Calu3 (cell line): ENCODE measurements at regions of chr18 and their contacts with region 1.

Region 1: GRCh38 chr18:76803814-76804213 is 18.5 kb upstream of the ZNF236 start:
- DNase-seq: peak; percentile 78
- H3K4me3 Mint-ChIP-seq: peak overlapping the region; percentile 26
- H3K27ac Mint-ChIP-seq: peak overlapping the region; percentile 38
- H3K4me1 Mint-ChIP-seq: peaks cover 8% of the 10 kb centered on the region
- H3K27me3 Mint-ChIP-seq: no peaks in the 10 kb centered on the region
- CTCF ChIP-seq: peak; percentile 75

Region 2: DNA sequence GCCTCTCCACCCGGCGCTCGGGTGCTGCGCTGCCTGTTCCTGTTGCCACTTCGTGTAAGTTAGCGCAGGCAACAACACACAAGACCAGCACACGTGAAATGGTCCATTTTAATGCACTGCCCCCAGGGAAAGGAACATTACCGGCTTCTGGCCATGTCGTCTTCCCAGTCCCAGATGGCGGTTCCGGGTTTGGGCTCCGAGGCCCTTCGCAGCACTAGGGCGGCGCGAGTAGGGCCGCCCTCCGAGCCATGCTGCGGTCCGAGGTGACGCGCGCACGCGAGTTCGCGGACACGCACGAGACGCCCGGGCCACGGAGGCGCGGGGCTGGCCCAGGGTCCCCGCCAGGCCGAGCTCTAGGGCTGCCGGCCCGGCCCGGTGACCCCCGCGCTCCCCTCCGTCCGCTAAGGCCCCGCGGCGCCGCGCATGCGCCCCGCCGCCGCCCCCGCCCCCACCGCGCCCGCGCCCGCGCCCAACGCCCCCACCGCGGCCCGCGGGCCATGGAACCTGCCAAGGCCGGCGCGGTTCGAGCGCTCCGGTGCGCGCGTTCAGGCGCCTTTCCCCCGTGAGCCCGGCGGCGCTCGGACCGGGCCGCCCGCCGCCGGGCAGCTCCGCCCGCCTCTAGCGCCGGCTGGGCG is 18.2 kb after region 1 on chr18:
- CTCF ChIA-PET with region 1: interaction called, 15 read pairs
- intact Hi-C with region 1: no loop called
- DNase-seq: peak; percentile 47
- H3K4me3 Mint-ChIP-seq: peak overlapping the region; percentile 82
- H3K27ac Mint-ChIP-seq: peak overlapping the region; percentile 84
- H3K4me1 Mint-ChIP-seq: peaks cover 31% of the 10 kb centered on the region
- H3K27me3 Mint-ChIP-seq: no peaks in the 10 kb centered on the region
- CTCF ChIP-seq: no peak

Region 3: GRCh38 chr18:76875390-76876325 is 71.8 kb after region 1 on chr18:
- CTCF ChIA-PET with region 1: no interaction called
- intact Hi-C with region 1: loop called (anchors 1 kb)
- DNase-seq: peak; percentile 52
- H3K4me3 Mint-ChIP-seq: no peak overlapping the region
- H3K27ac Mint-ChIP-seq: no peak overlapping the region
- H3K4me1 Mint-ChIP-seq: peaks cover 9% of the 10 kb centered on the region
- H3K27me3 Mint-ChIP-seq: no peaks in the 10 kb centered on the region
- CTCF ChIP-seq: peak; percentile 56

Region 4: DNA sequence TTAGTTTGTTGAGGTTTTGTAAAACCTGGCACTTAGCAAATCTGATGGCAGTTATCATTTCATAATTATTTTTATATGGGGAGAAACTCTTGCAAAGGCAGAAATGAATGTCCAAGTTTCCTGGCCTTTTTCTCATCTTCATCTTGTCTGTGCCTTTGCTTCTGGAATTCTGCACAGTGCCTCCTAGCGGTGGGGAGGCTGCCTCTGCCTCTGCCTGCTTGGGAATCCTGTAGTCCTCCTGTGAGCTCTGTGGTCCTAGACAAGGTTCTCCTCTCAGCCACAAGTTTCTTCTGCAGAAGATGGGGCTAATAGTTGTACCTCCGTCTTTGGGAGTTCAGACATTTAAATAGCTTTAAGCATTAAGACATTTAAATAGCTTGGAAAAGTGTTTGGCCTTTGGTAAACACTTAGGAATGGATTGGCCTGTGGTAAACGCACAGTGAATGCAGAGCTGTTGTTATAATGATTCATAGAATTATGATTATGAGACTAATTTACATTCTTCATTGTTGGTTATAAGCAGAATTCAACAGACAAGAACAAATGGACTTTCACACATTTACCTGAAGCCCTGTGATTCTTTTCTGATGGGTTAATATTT is 119.8 kb after region 1 on chr18:
- CTCF ChIA-PET with region 1: interaction called, 4 read pairs
- intact Hi-C with region 1: loop called (anchors 1 kb)
- DNase-seq: peak; percentile 55
- H3K4me3 Mint-ChIP-seq: no peak overlapping the region
- H3K27ac Mint-ChIP-seq: no peak overlapping the region
- H3K4me1 Mint-ChIP-seq: no peaks in the 10 kb centered on the region
- H3K27me3 Mint-ChIP-seq: no peaks in the 10 kb centered on the region
- CTCF ChIP-seq: peak; percentile 52

Region 5: GRCh38 chr18:76982841-76983587 is 179.2 kb after region 1 on chr18:
- CTCF ChIA-PET with region 1: interaction called, 5 read pairs
- intact Hi-C with region 1: loop called (anchors 1 kb)
- DNase-seq: peak; percentile 99
- H3K4me3 Mint-ChIP-seq: peak overlapping the region; percentile 42
- H3K27ac Mint-ChIP-seq: no peak overlapping the region
- H3K4me1 Mint-ChIP-seq: peaks cover 7% of the 10 kb centered on the region
- H3K27me3 Mint-ChIP-seq: no peaks in the 10 kb centered on the region
- CTCF ChIP-seq: peak; percentile 100

Region 6: GRCh38 chr18:77207540-77207939 is 403.7 kb after region 1 on chr18:
- CTCF ChIA-PET with region 1: no interaction called
- intact Hi-C with region 1: loop called (anchors 5 kb)
- DNase-seq: peak; percentile 87
- H3K4me3 Mint-ChIP-seq: no peak overlapping the region
- H3K27ac Mint-ChIP-seq: no peak overlapping the region
- H3K4me1 Mint-ChIP-seq: peaks cover 20% of the 10 kb centered on the region
- H3K27me3 Mint-ChIP-seq: peaks cover 27% of the 10 kb centered on the region
- CTCF ChIP-seq: peak; percentile 98